ENCODE measurements at regions of chrX and their contacts with region 1.

Region 1: DNA sequence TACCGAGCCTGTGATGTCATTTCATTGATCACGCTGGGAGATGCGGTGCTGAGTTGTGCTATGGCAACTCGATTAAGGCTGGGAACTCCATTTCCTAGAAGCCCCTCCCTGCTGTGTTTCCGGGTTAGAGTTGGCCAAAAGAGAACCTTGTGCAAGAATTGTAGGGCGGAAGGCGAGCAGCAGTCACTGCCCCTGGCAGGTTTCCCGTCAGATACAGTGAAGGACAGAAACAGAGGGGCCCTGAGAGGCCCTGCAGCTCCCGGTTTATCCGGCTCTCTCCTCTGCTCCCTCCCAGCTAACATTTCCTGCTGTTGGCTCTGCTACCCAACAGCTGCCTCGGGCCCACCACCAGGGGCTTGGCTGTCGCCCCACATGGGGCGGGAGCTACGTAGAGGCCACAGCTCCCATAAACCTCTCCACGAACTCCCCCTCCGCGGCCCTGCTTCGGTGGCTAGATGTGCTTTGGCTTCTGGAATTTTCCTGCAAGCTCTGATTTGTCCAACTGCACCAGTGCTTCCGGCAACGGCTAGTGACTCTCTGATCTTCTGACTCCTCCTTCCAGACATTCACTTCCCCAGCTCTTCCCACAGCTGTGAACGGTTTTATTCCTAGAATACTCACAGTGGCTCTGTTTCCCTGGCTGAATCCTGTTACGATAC is 74.9 kb upstream of the USP9X start:
- DNase-seq: peak; percentile 96
- H3K4me3 Mint-ChIP-seq: peak overlapping the region; percentile 67
- H3K27ac Mint-ChIP-seq: peak overlapping the region; percentile 74
- H3K4me1 Mint-ChIP-seq: peaks cover 26% of the 10 kb centered on the region
- H3K27me3 Mint-ChIP-seq: peaks cover 64% of the 10 kb centered on the region
- CTCF ChIP-seq: no peak

Region 2: GRCh38 chrX:41027431-41027831 is 17.1 kb after region 1 on chrX:
- CTCF ChIA-PET with region 1: no interaction called
- POLR2A ChIA-PET with region 1: interaction called, 20 read pairs
- intact Hi-C with region 1: no loop called
- DNase-seq: peak; percentile 59
- H3K4me3 Mint-ChIP-seq: no peak overlapping the region
- H3K27ac Mint-ChIP-seq: peak overlapping the region; percentile 39
- H3K4me1 Mint-ChIP-seq: peaks cover 9% of the 10 kb centered on the region
- H3K27me3 Mint-ChIP-seq: peaks cover 42% of the 10 kb centered on the region
- CTCF ChIP-seq: no peak